IMR-90 (cell line): ENCODE measurements at regions of chr2 and their contacts with region 1.

Region 1: GRCh38 chr2:20027705-20028434 is 15.4 kb upstream of the MATN3 start:
- DNase-seq: no peak
- ATAC-seq: no peak
- H3K4me3 ChIP-seq: no peak overlapping the region
- H3K27ac ChIP-seq: no peak overlapping the region
- H3K4me1 ChIP-seq: no peaks in the 10 kb centered on the region
- H3K27me3 ChIP-seq: no peaks in the 10 kb centered on the region
- CTCF ChIP-seq: no peak
- POLR2A ChIP-seq: no peak
- RAD21 ChIP-seq: no peak

Region 2: GRCh38 chr2:19963386-19963785 is 64.5 kb before region 1 on chr2:
- CTCF ChIA-PET with region 1: no interaction called
- POLR2A ChIA-PET with region 1: no interaction called
- dilution Hi-C with region 1: no loop called
- in situ Hi-C with region 1: loop called (anchors 10 kb)
- intact Hi-C with region 1: no loop called
- DNase-seq: no peak
- ATAC-seq: no peak
- H3K4me3 ChIP-seq: no peak overlapping the region
- H3K27ac ChIP-seq: no peak overlapping the region
- H3K4me1 ChIP-seq: no peaks in the 10 kb centered on the region
- H3K27me3 ChIP-seq: no peaks in the 10 kb centered on the region
- CTCF ChIP-seq: no peak
- POLR2A ChIP-seq: no peak
- RAD21 ChIP-seq: no peak